Activated CD4-positive, alpha-beta memory T cell treated with anti-CD3 and anti-CD28 coated beads for 36 hours (primary cell): ENCODE measurements at regions of chr19 and their contacts with region 1.

Region 1: GRCh38 chr19:54159352-54160181 is at the start of gene LENG1:
- DNase-seq: peak; percentile 100
- H3K4me3 Mint-ChIP-seq: peak within 1 kb of the TSS; percentile 95
- H3K27ac Mint-ChIP-seq: peak within 1 kb of the TSS; percentile 98
- H3K4me1 Mint-ChIP-seq: peaks cover 51% of the 10 kb centered on the region
- H3K27me3 Mint-ChIP-seq: peaks cover 3% of the 10 kb centered on the region
- total RNA-seq, gene LENG1: 4.7 to 5.3 TPM

Region 2: GRCh38 chr19:54102421-54103169 is 57.0 kb before region 1 on chr19 and contains the start of gene NDUFA3:
- CTCF ChIA-PET with region 1: no interaction called
- POLR2A ChIA-PET with region 1: no interaction called
- intact Hi-C with region 1: loop called (anchors 2 kb)
- DNase-seq: peak; percentile 99
- H3K4me3 Mint-ChIP-seq: peak within 1 kb of the TSS; percentile 99
- H3K27ac Mint-ChIP-seq: peak within 1 kb of the TSS; percentile 89
- H3K4me1 Mint-ChIP-seq: peaks cover 13% of the 10 kb centered on the region
- H3K27me3 Mint-ChIP-seq: no peaks in the 10 kb centered on the region
- total RNA-seq, gene NDUFA3: 106 to 113 TPM

Region 3: GRCh38 chr19:54137086-54137921 is 22.3 kb before region 1 on chr19 and contains the start of gene CNOT3:
- CTCF ChIA-PET with region 1: interaction called, 9 read pairs
- POLR2A ChIA-PET with region 1: interaction called, 12 read pairs
- intact Hi-C with region 1: loop called (anchors 1 kb)
- DNase-seq: peak; percentile 100
- H3K4me3 Mint-ChIP-seq: peak within 1 kb of the TSS; percentile 86
- H3K27ac Mint-ChIP-seq: peak within 1 kb of the TSS; percentile 87
- H3K4me1 Mint-ChIP-seq: peaks cover 52% of the 10 kb centered on the region
- H3K27me3 Mint-ChIP-seq: no peaks in the 10 kb centered on the region
- total RNA-seq, gene CNOT3: 54.6 to 58.7 TPM

Region 4: DNA sequence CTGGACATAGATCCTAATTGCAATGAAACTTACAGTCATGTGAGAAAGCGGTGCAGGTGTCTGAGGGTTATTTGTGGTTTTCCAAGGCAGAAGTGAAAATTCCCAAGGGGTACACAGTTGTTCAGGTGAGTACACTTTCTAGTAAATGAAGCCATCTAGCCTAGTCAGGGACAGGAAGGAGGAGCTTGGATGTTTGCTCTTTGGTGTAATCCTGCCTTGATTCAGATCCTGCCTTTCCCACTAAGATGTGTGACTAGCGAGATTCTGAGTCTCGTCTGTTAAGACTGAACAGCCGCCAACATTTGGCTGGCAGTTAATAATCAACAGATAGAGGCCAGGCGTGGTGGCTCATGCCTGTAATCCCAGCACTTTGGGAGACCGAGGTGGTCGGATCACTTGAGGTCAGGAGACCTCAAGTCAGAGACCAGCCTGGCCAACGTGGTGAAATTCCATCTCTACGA is 43.6 kb after region 1 on chr19:
- CTCF ChIA-PET with region 1: interaction called, 3 read pairs
- POLR2A ChIA-PET with region 1: interaction called, 11 read pairs
- intact Hi-C with region 1: loop called (anchors 1 kb)
- DNase-seq: no peak
- H3K4me3 Mint-ChIP-seq: peak overlapping the region; percentile 96
- H3K27ac Mint-ChIP-seq: peak overlapping the region; percentile 100
- H3K4me1 Mint-ChIP-seq: peaks cover 71% of the 10 kb centered on the region
- H3K27me3 Mint-ChIP-seq: no peaks in the 10 kb centered on the region

Region 5: GRCh38 chr19:54448774-54449700 is 289.5 kb after region 1 on chr19 and contains the start of gene LENG8:
- CTCF ChIA-PET with region 1: no interaction called
- POLR2A ChIA-PET with region 1: no interaction called
- intact Hi-C with region 1: loop called (anchors 5 kb)
- DNase-seq: peak; percentile 98
- H3K4me3 Mint-ChIP-seq: peak within 1 kb of the TSS; percentile 99
- H3K27ac Mint-ChIP-seq: peak within 1 kb of the TSS; percentile 99
- H3K4me1 Mint-ChIP-seq: peaks cover 43% of the 10 kb centered on the region
- H3K27me3 Mint-ChIP-seq: peaks cover 2% of the 10 kb centered on the region
- total RNA-seq, gene LENG8: 163 to 176 TPM